ENCODE measurements at regions of chr5 and their contacts with region 1.

Region 1: DNA sequence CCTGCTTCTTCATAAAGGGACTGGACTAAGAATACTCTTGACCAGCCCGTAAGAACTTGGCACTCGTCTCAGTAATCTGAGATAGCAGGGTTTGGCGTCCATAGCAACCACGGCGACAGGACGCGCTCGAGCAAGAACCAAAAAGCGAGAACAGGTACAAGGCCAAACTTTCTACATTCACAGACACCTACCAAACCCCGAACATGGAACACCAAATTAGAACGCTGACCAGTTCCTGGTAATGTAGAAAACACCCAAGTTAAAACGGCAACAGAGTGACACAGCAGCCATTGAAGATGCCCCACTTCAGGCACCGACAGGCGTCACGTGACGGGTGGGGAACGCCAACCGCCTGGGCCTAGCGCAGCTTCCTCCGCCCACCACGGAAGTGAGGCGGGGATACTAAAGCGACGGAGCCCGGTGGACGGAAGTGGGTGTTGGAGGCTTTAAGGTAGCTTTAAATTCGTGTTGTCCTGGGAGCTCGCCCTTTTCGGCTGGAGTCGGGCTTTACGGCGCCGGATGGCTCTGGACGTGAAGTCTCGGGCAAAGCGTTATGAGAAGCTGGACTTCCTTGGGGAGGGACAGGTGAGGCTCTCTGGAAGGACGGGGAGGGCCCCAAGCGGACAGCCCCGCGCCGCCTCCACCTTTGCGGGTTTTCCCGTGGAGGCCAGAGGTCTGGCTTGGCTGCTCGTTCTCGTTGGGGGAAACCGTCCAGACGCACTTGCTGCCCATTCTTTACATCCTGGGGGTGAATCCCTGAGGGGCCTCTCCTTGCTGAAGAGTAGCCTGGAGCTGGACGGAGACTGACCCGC is at the start of gene CDK7:
- DNase-seq: peak; percentile 76 to 93 (median 89)
- ATAC-seq: peak; percentile 100
- H3K4me3 ChIP-seq: peak within 1 kb of the TSS; percentile 87
- H3K4me3 Mint-ChIP-seq: peak within 1 kb of the TSS; percentile 82 to 99 (median 98)
- H3K27ac ChIP-seq: peak within 1 kb of the TSS; percentile 88
- H3K27ac Mint-ChIP-seq: peak within 1 kb of the TSS; percentile 77 to 96 (median 89)
- H3K4me1 ChIP-seq: peaks cover 10 to 16% of the 10 kb centered on the region in 2 donors
- H3K4me1 Mint-ChIP-seq: peaks cover 29 to 50% (median 39%) of the 10 kb centered on the region in 7 donors
- H3K27me3 ChIP-seq: no peaks in the 10 kb centered on the region
- H3K27me3 Mint-ChIP-seq: no peaks in the 10 kb centered on the region
- total RNA-seq, gene CDK7: 18.2 to 28.9 (median 21.8) TPM

Region 2: GRCh38 chr5:69042915-69043658 is 191.6 kb before region 1 on chr5:
- CTCF ChIA-PET with region 1: no interaction called
- POLR2A ChIA-PET with region 1: no interaction called
- intact Hi-C with region 1: loop called in 1 of 2 experiments (anchors 5 kb)
- DNase-seq: peak; percentile 42 to 93 (median 88)
- ATAC-seq: peak; percentile 100
- H3K4me3 ChIP-seq: peak overlapping the region; percentile 72
- H3K4me3 Mint-ChIP-seq: peak overlapping the region; percentile 74 to 93 (median 88)
- H3K27ac ChIP-seq: peak overlapping the region; percentile 74
- H3K27ac Mint-ChIP-seq: peak overlapping the region; percentile 70 to 96 (median 92)
- H3K4me1 ChIP-seq: no peaks in the 10 kb centered on the region
- H3K4me1 Mint-ChIP-seq: peaks cover 0 to 14% (median 6%) of the 10 kb centered on the region in 7 donors
- H3K27me3 ChIP-seq: no peaks in the 10 kb centered on the region
- H3K27me3 Mint-ChIP-seq: peaks cover 0 to 5% (median 0%) of the 10 kb centered on the region in 5 donors

Region 3: GRCh38 chr5:69166686-69167492 is 67.8 kb before region 1 on chr5 and contains the start of gene CCNB1:
- CTCF ChIA-PET with region 1: no interaction called
- POLR2A ChIA-PET with region 1: interaction called, 4 read pairs
- intact Hi-C with region 1: loop called (anchors 1 kb)
- DNase-seq: peak; percentile 91 to 98 (median 94)
- ATAC-seq: peak; percentile 100
- H3K4me3 ChIP-seq: peak within 1 kb of the TSS; percentile 78
- H3K4me3 Mint-ChIP-seq: peak within 1 kb of the TSS; percentile 88 to 98 (median 94)
- H3K27ac ChIP-seq: peak within 1 kb of the TSS; percentile 68
- H3K27ac Mint-ChIP-seq: peak within 1 kb of the TSS; percentile 77 to 94 (median 90)
- H3K4me1 ChIP-seq: peaks cover 5 to 15% of the 10 kb centered on the region in 2 donors
- H3K4me1 Mint-ChIP-seq: peaks cover 17 to 44% (median 26%) of the 10 kb centered on the region in 7 donors
- H3K27me3 ChIP-seq: no peaks in the 10 kb centered on the region
- H3K27me3 Mint-ChIP-seq: no peaks in the 10 kb centered on the region
- total RNA-seq, gene CCNB1: 1.3 to 110 (median 3.4) TPM

Region 4: GRCh38 chr5:69189162-69190086 is 45.2 kb before region 1 on chr5 and contains the start of gene CENPH:
- CTCF ChIA-PET with region 1: no interaction called
- POLR2A ChIA-PET with region 1: interaction called, 6 read pairs
- intact Hi-C with region 1: loop called (anchors 1 kb)
- DNase-seq: peak; percentile 83 to 92 (median 90)
- ATAC-seq: peak; percentile 99
- H3K4me3 ChIP-seq: peak within 1 kb of the TSS; percentile 99
- H3K4me3 Mint-ChIP-seq: peak within 1 kb of the TSS; percentile 86 to 96 (median 92)
- H3K27ac ChIP-seq: peak within 1 kb of the TSS; percentile 75
- H3K27ac Mint-ChIP-seq: peak within 1 kb of the TSS; percentile 85 to 96 (median 92)
- H3K4me1 ChIP-seq: peaks cover 9 to 11% of the 10 kb centered on the region in 2 donors
- H3K4me1 Mint-ChIP-seq: peaks cover 0 to 19% (median 16%) of the 10 kb centered on the region in 7 donors
- H3K27me3 ChIP-seq: no peaks in the 10 kb centered on the region
- H3K27me3 Mint-ChIP-seq: no peaks in the 10 kb centered on the region
- total RNA-seq, gene CENPH: 3.4 to 25.3 (median 8.2) TPM

Region 5: GRCh38 chr5:69217548-69218526 is 16.8 kb before region 1 on chr5:
- CTCF ChIA-PET with region 1: interaction called, 5 read pairs
- POLR2A ChIA-PET with region 1: interaction called, 18 read pairs
- intact Hi-C with region 1: loop called (anchors 1 kb)
- DNase-seq: peak; percentile 81 to 93 (median 86)
- ATAC-seq: peak; percentile 97
- H3K4me3 ChIP-seq: peak overlapping the region; percentile 100
- H3K4me3 Mint-ChIP-seq: peak overlapping the region; percentile 95 to 99 (median 96)
- H3K27ac ChIP-seq: peak overlapping the region; percentile 92
- H3K27ac Mint-ChIP-seq: peak overlapping the region; percentile 96 to 99 (median 97)
- H3K4me1 ChIP-seq: peaks cover 5 to 8% of the 10 kb centered on the region in 2 donors
- H3K4me1 Mint-ChIP-seq: peaks cover 2 to 37% (median 29%) of the 10 kb centered on the region in 7 donors
- H3K27me3 ChIP-seq: no peaks in the 10 kb centered on the region
- H3K27me3 Mint-ChIP-seq: no peaks in the 10 kb centered on the region

Region 6: DNA sequence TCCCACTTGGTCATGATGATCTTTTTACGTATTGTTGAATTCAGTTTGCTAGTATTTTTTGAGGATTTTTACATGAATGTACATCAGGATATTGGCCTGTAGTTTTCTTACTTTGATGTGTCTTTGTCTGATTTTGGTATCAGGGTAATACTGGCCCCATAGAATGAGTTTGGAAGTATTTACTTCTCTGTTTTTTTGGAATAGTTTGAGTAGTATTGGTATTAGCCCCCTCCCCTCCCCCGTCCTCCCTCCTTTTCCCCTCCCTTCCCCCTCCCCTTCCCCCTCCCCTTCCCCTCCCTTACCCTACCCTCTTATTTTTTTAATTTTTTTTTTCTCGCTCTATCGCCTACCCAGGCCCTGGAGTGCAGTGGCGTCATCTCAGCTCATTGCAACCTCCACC is 10.4 kb after region 1 on chr5:
- CTCF ChIA-PET with region 1: no interaction called
- POLR2A ChIA-PET with region 1: no interaction called
- intact Hi-C with region 1: loop called in 1 of 2 experiments (anchors 1 kb)
- DNase-seq: no peak
- ATAC-seq: no peak
- H3K4me3 ChIP-seq: no peak overlapping the region
- H3K4me3 Mint-ChIP-seq: no peak overlapping the region
- H3K27ac ChIP-seq: no peak overlapping the region
- H3K27ac Mint-ChIP-seq: no peak overlapping the region
- H3K4me1 ChIP-seq: peaks cover 0 to 4% of the 10 kb centered on the region in 2 donors
- H3K4me1 Mint-ChIP-seq: peaks cover 25 to 80% (median 60%) of the 10 kb centered on the region in 7 donors
- H3K27me3 ChIP-seq: no peaks in the 10 kb centered on the region
- H3K27me3 Mint-ChIP-seq: no peaks in the 10 kb centered on the region

Region 7: DNA sequence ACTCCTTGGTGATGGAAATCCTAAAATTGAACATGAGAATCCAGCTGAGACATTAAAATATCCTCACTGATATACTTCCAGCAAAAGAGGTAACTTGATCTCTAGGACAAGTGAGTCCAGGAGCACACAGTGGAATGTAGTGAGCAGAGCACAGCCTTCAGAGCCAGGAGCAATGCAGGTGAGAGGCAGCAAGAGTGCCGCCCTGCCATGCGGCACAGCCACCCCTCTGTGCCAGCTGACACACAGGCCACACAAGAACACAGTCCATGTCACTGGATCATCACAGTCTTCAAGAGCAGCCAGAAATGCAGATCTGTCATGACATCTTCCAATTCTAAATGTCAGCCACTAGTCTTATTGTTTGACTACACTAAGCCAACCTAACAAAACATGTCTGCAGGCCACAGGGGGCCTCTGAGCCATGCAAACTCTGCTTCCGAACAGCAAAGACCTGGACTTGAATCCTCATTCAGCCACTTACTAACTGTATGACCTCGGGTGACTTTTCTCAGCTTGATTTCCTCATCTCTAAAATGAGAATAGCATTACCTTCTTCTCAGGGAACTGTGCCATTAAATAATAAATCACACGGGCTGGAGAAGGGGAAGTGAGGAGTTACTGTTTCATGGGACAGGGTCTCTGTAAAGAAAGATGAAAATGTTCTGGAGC is 50.9 kb after region 1 on chr5:
- CTCF ChIA-PET with region 1: no interaction called
- POLR2A ChIA-PET with region 1: no interaction called
- intact Hi-C with region 1: no loop called
- DNase-seq: no peak
- ATAC-seq: no peak
- H3K4me3 ChIP-seq: no peak overlapping the region
- H3K4me3 Mint-ChIP-seq: no peak overlapping the region
- H3K27ac ChIP-seq: no peak overlapping the region
- H3K27ac Mint-ChIP-seq: peak overlapping the region in 3 of 9 donors; percentile 2 to 43 (median 12)
- H3K4me1 ChIP-seq: no peaks in the 10 kb centered on the region
- H3K4me1 Mint-ChIP-seq: peaks cover 0 to 2% (median 0%) of the 10 kb centered on the region in 7 donors
- H3K27me3 ChIP-seq: no peaks in the 10 kb centered on the region
- H3K27me3 Mint-ChIP-seq: no peaks in the 10 kb centered on the region

Region 8: GRCh38 chr5:69369369-69370121 is 134.9 kb after region 1 on chr5 and contains the starts of genes AK6, RAD17 and TAF9:
- CTCF ChIA-PET with region 1: no interaction called
- POLR2A ChIA-PET with region 1: interaction called, 3 read pairs
- intact Hi-C with region 1: loop called (anchors 1 kb)
- DNase-seq: peak; percentile 90 to 99 (median 95)
- ATAC-seq: peak; percentile 95
- H3K4me3 ChIP-seq: peak within 1 kb of the TSS; percentile 97
- H3K4me3 Mint-ChIP-seq: peak within 1 kb of the TSS; percentile 91 to 100 (median 97)
- H3K27ac ChIP-seq: peak within 1 kb of the TSS; percentile 99
- H3K27ac Mint-ChIP-seq: peak within 1 kb of the TSS; percentile 95 to 100 (median 99)
- H3K4me1 ChIP-seq: peaks cover 18 to 20% of the 10 kb centered on the region in 2 donors
- H3K4me1 Mint-ChIP-seq: peaks cover 20 to 63% (median 51%) of the 10 kb centered on the region in 7 donors
- H3K27me3 ChIP-seq: no peaks in the 10 kb centered on the region
- H3K27me3 Mint-ChIP-seq: no peaks in the 10 kb centered on the region
- total RNA-seq, gene AK6: 12.4 to 30.2 (median 24.0) TPM
- total RNA-seq, gene RAD17: 19.7 to 32.0 (median 26.3) TPM
- total RNA-seq, gene TAF9: 48.5 to 54.1 (median 50.4) TPM

Region 9: DNA sequence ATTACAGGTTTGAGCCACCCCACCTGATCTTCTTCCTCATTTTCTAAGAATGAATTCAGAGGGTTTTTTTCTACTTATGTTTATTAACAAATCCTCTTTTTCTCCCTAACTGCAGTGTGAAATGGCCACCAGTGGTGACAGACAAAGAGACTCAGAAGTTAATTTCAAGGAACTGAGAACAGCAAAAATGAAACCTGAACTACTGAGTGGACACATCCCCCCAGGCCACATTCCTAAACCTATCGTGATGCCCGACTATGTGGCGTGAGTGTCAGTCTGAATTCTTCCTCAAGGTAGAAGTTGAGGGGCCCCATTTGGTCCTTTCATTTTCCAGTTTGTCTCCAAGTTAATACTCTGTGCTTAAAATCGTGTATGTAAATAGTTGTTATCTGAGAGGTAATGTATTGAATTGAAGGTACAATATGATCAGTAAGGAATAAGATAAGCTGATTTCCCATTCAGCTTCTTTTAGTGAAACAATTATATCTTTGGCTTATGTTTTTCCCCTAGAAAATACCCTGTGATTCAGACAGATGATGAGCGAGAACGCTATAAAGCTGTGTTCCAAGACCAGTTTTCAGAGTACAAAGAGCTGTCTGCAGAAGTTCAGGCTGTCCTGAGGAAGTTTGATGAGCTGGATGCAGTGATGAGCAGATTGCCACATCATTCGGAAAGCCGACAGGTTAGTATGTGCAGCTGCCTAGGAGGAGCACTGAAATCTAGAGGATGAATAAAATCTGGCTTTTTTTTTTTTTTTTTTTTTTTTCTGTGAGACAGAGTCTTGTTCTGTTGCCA is 197.9 kb after region 1 on chr5:
- CTCF ChIA-PET with region 1: no interaction called
- POLR2A ChIA-PET with region 1: no interaction called
- intact Hi-C with region 1: no loop called
- DNase-seq: no peak
- ATAC-seq: no peak
- H3K4me3 ChIP-seq: no peak overlapping the region
- H3K4me3 Mint-ChIP-seq: no peak overlapping the region
- H3K27ac ChIP-seq: no peak overlapping the region
- H3K27ac Mint-ChIP-seq: no peak overlapping the region
- H3K4me1 ChIP-seq: no peaks in the 10 kb centered on the region
- H3K4me1 Mint-ChIP-seq: no peaks in the 10 kb centered on the region
- H3K27me3 ChIP-seq: no peaks in the 10 kb centered on the region
- H3K27me3 Mint-ChIP-seq: no peaks in the 10 kb centered on the region

Region 10: DNA sequence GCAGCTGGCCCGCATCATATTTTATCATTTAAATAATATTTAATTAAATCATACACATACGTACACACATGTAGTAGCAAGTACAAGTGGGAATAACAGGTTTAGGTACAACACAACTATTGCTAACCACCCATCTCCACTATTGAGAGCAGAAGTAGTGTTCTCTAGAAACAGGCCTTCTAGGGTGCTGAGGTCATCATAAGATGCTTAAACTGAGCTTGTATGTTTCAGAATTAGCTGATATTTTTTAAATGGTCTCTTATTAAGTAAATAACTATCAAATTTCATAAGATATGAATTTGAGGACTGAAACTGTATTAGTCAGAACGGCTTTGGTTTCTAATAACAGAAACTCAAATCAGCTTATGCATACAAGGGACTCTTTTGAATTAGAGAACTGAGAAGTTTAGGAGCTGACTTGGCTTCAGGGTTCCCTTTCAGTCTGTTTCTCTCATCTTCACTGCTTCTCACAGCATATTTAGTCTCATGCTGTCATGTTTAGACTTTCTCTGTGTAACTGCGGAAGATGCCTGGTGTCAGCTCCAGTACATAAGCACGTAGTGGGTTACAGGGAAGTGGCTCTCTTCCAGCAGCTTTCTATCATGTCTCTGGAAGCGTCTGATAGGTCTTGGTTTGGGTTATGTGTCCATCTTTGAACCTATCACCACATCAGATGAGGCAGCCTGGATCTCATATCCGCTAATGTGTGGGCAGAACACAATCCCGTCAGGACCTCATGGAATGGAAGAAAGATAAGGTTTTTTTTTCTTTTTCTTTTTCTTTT is 233.0 kb after region 1 on chr5:
- CTCF ChIA-PET with region 1: no interaction called
- POLR2A ChIA-PET with region 1: no interaction called
- intact Hi-C with region 1: no loop called
- DNase-seq: no peak
- ATAC-seq: no peak
- H3K4me3 ChIP-seq: no peak overlapping the region
- H3K4me3 Mint-ChIP-seq: no peak overlapping the region
- H3K27ac ChIP-seq: no peak overlapping the region
- H3K27ac Mint-ChIP-seq: no peak overlapping the region
- H3K4me1 ChIP-seq: no peaks in the 10 kb centered on the region
- H3K4me1 Mint-ChIP-seq: no peaks in the 10 kb centered on the region
- H3K27me3 ChIP-seq: no peaks in the 10 kb centered on the region
- H3K27me3 Mint-ChIP-seq: peaks cover 0 to 8% (median 2%) of the 10 kb centered on the region in 5 donors

Measured in naive thymus-derived CD4-positive, alpha-beta T cell (primary cell).